Activated CD4-positive, alpha-beta T cell treated with anti-CD3 and anti-CD28 coated beads, Interleukin-2, amount 10 ng/mL, durations not matched to agents 24 days and 14 days (primary cell): ENCODE measurements at regions of chr6 and their contacts with region 1.

Region 1: DNA sequence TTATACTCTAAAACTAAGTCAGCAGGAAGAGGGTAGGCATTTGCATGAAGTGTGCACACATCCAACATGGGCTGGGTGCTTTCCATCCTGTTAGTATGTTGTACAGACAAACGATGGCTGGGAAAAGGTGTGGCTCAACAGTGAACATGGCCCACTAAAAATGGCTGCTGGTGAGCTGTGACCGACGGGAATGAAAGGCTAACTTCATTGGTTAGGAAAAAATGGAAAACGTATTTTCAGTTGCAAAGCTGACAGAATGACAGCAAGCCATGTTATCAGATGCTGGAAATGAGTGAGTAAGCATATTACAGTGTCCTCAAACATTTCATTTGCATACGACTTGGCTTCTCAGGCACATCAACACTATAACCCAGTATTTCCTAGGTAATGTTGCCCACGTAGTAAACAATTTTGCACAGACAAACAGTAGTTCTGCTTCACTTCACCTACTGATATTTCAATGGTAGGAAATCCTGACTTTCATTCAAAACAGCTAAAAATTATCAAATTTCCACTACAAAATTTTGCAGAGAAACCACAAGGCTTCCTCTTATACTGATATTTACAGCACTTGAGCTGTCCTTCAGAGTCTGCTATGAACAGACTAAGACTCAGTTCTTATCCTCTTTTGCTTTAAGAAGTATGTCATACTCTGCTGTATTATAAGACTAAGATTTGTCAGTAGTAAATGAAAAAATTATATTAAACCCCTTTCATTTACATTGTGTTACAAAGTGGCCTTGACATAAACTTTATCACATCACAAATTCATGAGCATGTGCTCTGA is 98.9 kb downstream of the IRF4 start:
- DNase-seq: peak; percentile 82
- H3K4me3 Mint-ChIP-seq: peak overlapping the region; percentile 77
- H3K27ac Mint-ChIP-seq: peak overlapping the region; percentile 99
- H3K4me1 Mint-ChIP-seq: peaks cover 87% of the 10 kb centered on the region
- H3K27me3 Mint-ChIP-seq: no peaks in the 10 kb centered on the region

Region 2: DNA sequence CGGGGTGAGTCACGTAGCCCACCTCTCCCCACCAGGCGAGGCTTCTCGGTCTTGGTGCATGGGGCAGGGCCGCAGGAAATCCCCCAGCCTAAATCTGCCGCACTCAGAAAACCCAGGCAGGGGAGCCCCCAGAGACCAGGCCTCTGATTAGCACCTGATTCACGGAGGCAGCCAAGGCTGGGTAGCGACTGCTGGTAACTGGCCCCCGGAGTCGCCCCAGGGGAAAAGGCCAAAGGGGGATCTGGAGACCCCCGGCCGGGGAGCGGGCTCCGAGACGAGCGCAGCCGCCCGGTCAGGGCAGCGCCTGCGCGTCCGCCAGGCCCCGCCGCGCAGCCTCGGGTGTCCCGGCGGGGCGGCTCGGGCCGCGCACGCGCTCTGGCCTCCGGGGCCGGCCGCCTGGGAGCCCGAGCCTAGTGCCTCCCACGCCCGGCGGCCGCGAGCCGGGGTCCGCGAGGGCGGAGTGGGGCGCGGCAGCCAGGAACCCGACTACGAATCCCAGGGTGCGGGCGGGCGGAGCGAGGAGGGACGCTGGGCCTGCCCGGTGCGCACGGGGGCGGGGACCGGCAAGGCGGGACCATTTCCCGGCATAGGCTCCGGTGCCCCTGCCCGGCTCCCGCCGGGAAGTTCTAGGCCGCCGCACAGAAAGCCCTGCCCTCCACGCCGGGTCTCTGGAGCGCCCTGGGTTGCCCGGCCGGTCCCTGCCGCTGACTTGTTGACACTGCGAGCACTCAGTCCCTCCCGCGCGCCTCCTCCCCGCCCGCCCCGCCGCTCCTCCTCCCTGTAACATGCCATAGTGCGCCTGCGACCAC is 198.5 kb before region 1 on chr6 and contains the start of gene DUSP22:
- intact Hi-C with region 1: loop called (anchors 5 kb)
- DNase-seq: peak; percentile 94
- H3K4me3 Mint-ChIP-seq: peak within 1 kb of the TSS; percentile 86
- H3K27ac Mint-ChIP-seq: peak within 1 kb of the TSS; percentile 95
- H3K4me1 Mint-ChIP-seq: peaks cover 45% of the 10 kb centered on the region
- H3K27me3 Mint-ChIP-seq: no peaks in the 10 kb centered on the region
- total RNA-seq, gene DUSP22: 22.5 and 24.0 TPM in 2 replicates

Region 3: DNA sequence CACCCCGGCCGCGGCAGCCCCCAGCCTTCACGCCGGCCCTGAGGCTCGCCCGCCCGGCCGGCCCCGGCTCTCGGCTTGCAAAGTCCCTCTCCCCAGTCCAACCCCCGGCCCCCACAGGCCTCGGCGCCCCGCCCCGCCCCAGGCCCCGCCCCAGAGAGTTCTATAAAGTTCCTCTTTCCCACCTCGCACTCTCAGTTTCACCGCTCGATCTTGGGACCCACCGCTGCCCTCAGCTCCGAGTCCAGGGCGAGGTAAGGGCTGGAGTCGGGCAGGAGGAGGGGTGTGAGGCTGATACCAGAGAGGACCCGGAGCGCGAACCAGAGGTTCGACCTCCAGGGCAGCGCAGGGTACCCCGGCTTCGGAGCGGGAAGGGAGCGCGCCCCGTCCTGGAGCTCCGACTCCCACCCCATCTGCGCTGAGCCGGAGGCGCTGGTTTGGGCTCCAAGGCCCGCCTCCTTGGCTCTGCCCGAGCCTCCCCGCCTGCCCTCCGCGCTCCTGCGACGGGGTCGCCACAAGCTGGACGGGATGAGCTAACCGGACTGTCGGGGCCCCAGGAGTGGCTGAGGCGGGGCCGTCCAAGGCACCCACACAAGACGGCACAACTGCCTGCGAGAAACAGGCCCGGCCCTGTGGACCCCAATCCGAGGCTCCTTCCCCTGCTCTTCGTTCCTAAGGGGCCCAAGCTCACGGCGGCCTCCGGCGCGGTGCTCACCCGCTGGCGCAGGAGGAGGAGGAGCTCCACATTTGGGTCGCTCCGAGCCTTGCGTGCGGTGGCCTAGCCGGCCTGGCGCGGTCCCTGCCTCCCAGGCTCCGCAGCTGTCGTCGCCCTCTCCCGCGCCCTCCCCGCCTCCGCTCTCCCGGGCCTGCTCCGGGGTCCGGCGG is 98.6 kb before region 1 on chr6 and contains the start of gene IRF4:
- intact Hi-C with region 1: loop called (anchors 1 kb)
- DNase-seq: peak; percentile 92
- H3K4me3 Mint-ChIP-seq: peak within 1 kb of the TSS; percentile 93
- H3K27ac Mint-ChIP-seq: peak within 1 kb of the TSS; percentile 98
- H3K4me1 Mint-ChIP-seq: peaks cover 40% of the 10 kb centered on the region
- H3K27me3 Mint-ChIP-seq: peaks cover 2% of the 10 kb centered on the region
- total RNA-seq, gene IRF4: 831 and 846 TPM in 2 replicates

Region 4: DNA sequence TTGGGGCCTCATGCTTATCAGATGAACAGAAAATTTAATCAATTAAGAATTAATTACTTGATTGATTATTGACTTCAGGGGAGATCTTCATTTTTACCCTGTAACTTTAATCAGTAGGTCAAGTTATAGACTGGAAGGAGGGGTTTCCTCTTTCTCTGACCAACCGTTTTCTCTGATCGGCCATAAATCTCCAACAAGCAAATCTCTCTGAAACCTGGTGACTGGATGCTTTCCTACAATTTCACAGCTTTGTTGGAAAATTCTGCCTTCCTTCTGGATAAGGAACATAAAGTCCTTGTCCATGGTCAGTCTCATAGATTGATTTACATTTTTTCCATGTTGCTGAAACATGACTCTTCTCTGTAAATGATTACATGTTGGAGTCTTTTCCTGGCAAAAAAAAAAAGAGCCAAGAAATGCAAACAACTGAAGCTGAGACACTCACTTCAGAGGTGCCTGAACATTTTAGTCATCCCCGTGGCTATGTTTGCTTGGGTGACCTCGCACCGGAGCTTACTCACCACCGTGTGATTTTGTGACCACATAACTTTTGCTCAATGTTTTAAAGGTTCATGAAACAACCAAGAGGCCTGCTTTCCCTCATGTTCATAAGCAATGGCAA is 67.9 kb before region 1 on chr6:
- intact Hi-C with region 1: loop called (anchors 2 kb)
- DNase-seq: peak; percentile 88
- H3K4me3 Mint-ChIP-seq: no peak overlapping the region
- H3K27ac Mint-ChIP-seq: peak overlapping the region; percentile 91
- H3K4me1 Mint-ChIP-seq: peaks cover 30% of the 10 kb centered on the region
- H3K27me3 Mint-ChIP-seq: no peaks in the 10 kb centered on the region

Region 5: DNA sequence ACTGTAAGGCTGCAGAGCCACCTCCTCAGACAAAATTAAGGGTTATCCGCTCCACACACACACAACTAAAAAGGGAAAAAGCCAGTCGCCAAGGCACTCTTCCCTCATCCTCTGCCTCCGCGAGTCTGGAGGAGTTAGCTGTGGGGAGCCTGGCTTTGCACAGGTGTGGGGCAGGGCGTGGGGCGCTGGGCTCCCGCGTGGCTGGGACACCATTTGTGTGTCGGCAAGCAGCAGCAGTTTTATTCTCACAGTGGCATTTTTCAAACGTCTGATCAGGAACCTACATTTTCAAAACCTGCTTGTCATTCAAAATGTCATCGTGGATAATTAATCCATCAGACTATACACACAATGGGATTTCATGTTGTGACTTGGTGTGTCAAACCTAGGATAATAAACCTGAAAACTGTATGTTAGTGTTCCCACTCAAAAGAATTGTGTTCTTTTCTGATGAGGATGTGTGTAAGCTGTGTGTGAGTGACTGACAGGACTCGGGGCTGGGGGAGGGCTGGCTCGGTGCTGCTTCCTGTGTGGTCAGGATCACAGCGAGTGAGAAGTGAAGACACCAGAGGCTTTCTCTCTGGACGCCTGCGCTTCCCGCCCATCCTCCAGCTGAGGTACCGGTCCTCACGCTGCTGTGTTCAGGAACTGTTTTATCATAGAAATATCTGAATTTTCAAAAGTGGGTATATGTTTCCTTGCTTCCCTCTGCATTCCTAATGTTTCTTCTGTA is 15.8 kb before region 1 on chr6:
- intact Hi-C with region 1: loop called (anchors 1 kb)
- DNase-seq: peak; percentile 94
- H3K4me3 Mint-ChIP-seq: peak overlapping the region; percentile 26
- H3K27ac Mint-ChIP-seq: peak overlapping the region; percentile 47
- H3K4me1 Mint-ChIP-seq: peaks cover 70% of the 10 kb centered on the region
- H3K27me3 Mint-ChIP-seq: no peaks in the 10 kb centered on the region

Region 6: DNA sequence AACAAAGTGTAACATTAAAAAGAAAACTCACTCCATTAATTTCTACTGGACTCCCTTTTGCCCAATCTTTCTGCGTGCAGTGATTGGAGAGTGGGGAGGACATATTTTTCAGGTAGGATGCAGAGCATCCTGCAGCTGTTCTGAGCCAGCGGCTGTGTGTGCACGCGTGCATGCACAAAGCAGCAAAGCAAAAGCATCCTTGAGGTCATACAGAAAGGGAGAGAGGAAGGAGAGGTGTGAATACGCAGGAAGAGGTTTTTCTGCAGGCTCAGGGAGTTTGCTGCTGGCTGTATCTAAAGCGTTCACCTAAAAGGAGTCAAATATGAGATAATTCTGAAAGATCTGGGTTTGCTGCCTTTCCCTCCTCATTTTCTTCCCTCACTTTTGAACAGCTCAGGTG is 58.1 kb after region 1 on chr6:
- intact Hi-C with region 1: loop called (anchors 1 kb)
- DNase-seq: peak; percentile 84
- H3K4me3 Mint-ChIP-seq: peak overlapping the region; percentile 67
- H3K27ac Mint-ChIP-seq: peak overlapping the region; percentile 87
- H3K4me1 Mint-ChIP-seq: peaks cover 53% of the 10 kb centered on the region
- H3K27me3 Mint-ChIP-seq: no peaks in the 10 kb centered on the region